Vagina (tissue), 2 donors: ENCODE measurements at regions of chr18 and their contacts with region 1.

Region 1: DNA sequence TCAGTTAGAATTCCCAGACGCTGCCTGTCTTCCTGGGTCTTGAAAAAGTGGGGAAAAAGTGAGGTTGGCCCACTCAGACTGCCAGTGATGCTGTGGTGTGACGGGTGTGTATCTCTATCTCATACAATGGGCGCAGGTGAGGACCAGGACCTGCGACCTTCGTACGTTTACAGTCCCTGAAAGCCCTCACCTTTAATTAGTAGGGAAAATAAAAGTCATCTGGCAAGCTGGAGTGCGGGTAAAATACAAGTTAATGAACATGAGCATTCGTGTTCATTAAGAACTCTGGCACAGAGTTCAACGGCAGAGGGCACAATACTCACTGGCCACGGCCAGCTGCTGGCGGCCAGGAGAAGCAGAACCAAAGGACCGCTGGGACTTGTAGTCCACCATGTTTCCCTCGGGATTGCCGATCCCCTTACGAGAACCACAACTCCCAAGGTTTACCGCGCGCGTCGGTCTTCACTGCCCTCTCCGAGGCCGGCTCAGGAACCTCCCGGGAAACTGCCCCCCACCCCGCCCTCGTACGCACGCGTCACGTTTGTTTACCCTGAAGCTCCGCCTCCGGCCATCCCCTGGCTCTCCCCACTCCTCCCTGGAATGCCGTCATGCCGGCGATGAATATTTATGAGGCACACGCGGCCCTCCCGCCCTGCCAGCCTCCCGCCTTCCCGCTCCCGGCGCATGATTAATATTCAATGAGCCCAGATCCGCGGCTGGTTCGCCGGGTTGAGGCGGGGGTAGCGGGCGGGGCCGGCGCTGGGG is 488 bp upstream of the PHLPP1 start:
- DNase-seq: peak; percentile 99 to 100
- H3K4me3 ChIP-seq: peak overlapping the region; percentile 82 to 92
- H3K27ac ChIP-seq: peak overlapping the region; percentile 95
- H3K4me1 ChIP-seq: peaks cover 13% of the 10 kb centered on the region
- H3K27me3 ChIP-seq: no peaks in the 10 kb centered on the region
- CTCF ChIP-seq: peak; percentile 24 to 93 (median 66)
- POLR2A ChIP-seq: no peak

Region 2: GRCh38 chr18:62437235-62438017 is 277.4 kb before region 1 on chr18:
- intact Hi-C with region 1: loop called (anchors 5 kb)
- DNase-seq: peak in 1 of 2 donors; percentile 93
- H3K4me3 ChIP-seq: no peak overlapping the region
- H3K27ac ChIP-seq: peak overlapping the region; percentile 67
- H3K4me1 ChIP-seq: peaks cover 25% of the 10 kb centered on the region
- H3K27me3 ChIP-seq: no peaks in the 10 kb centered on the region
- CTCF ChIP-seq: no peak
- POLR2A ChIP-seq: no peak

Region 3: GRCh38 chr18:62522504-62523254 is 192.2 kb before region 1 on chr18 and contains the start of gene ZCCHC2:
- intact Hi-C with region 1: loop called (anchors 5 kb)
- DNase-seq: peak; percentile 99
- H3K4me3 ChIP-seq: peak within 1 kb of the TSS; percentile 64 to 80
- H3K27ac ChIP-seq: peak within 1 kb of the TSS; percentile 95
- H3K4me1 ChIP-seq: peaks cover 28% of the 10 kb centered on the region
- H3K27me3 ChIP-seq: no peaks in the 10 kb centered on the region
- CTCF ChIP-seq: no peak
- POLR2A ChIP-seq: peak; percentile 71 to 87
- total RNA-seq, gene ZCCHC2: 30.4 TPM

Region 4: DNA sequence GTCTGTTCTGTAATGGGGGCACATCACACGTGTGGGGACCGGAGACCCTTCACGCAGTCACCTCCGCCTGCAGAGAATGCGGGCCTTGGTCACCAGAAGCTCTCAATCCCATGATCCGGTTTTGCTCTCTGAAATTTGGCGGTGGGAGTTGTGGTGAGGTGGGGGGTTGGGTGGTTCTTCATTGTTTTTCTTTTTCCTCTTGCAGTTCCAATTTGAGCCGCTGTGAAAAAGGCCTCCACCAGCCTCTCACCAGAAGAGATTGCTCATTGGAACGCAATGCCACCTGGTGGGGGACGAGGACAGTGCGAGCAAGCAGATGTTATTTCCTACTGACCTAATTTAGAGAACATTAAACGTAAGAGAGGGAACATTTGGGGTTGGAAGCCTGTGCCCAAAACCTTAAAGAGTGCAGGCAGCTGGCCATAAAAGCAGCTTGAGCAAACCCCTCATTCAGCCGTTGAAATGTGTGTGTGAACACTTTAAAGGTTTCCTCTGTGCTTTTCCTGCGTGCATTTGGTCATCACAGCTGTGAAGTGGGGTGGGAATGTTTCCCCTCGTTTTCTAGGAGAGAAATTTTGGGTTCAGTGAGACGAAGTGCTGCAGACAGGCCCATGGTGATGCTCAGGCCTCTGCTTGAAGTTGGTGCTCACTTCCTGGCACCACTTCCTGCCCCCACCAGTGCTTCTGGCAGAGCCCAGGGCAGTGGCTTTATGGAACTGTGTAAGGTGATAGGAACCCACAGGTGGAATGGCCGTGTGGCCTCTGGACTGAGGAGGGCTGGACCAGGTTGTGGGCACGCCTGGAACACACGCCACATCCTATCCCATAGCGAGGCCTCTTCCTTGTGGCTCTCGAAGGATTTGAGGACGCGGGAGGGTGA is 130.4 kb before region 1 on chr18:
- intact Hi-C with region 1: loop called (anchors 10 kb)
- DNase-seq: peak in 1 of 2 donors; percentile 93
- H3K4me3 ChIP-seq: no peak overlapping the region
- H3K27ac ChIP-seq: peak overlapping the region; percentile 70
- H3K4me1 ChIP-seq: peaks cover 15% of the 10 kb centered on the region
- H3K27me3 ChIP-seq: no peaks in the 10 kb centered on the region
- CTCF ChIP-seq: peak; percentile 97 to 99 (median 98)
- POLR2A ChIP-seq: no peak

Region 5: GRCh38 chr18:62763101-62763521 is 48.3 kb after region 1 on chr18:
- intact Hi-C with region 1: no loop called
- DNase-seq: no peak
- H3K4me3 ChIP-seq: no peak overlapping the region
- H3K27ac ChIP-seq: no peak overlapping the region
- H3K4me1 ChIP-seq: peaks cover 32% of the 10 kb centered on the region
- H3K27me3 ChIP-seq: no peaks in the 10 kb centered on the region
- CTCF ChIP-seq: no peak
- POLR2A ChIP-seq: no peak

Region 6: GRCh38 chr18:62982600-62983251 is 267.9 kb after region 1 on chr18:
- intact Hi-C with region 1: loop called (anchors 2 kb)
- DNase-seq: no peak
- H3K4me3 ChIP-seq: peak overlapping the region; percentile 4 to 28
- H3K27ac ChIP-seq: no peak overlapping the region
- H3K4me1 ChIP-seq: no peaks in the 10 kb centered on the region
- H3K27me3 ChIP-seq: no peaks in the 10 kb centered on the region
- CTCF ChIP-seq: peak; percentile 60 to 79 (median 72)
- POLR2A ChIP-seq: no peak